Sigmoid colon (tissue), 7 donors: ENCODE measurements at regions of chr6 and their contacts with region 1.

Region 1: DNA sequence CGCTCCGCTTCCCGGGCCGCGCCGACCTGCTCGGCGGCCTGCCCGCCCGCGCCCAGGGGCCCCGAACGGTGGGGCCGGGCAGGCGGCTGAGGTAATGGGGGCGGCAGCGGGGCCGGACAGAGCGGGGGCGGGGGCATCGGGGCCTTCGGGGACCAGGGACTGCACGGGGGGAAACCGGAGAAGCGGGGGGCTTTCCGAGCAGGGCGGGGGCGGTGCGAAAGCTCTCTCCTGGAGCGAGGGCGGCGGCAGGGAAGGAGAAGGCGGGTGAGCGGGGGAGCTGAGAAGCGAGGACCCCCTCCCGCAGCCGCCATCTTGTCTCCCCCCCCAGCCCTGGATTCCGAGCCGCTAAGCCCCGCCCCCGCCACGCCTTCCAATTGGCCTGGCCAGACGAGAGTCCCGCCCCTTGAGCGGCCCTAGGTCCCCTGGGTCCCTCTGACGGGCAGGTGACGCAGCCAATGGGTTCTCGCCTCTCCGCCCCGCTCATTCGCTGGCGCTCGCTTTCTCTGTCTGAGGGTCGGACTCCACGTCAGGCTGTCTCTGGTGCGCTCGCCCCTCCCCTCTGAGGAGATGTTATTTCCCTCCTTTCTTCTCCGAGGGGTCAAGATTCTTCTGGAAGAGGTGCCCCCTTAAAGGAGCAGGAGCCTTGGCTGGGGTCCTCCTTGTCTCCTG is 470 bp downstream of the BRPF3 start:
- DNase-seq: peak; percentile 99
- H3K4me3 ChIP-seq: peak overlapping the region; percentile 80 to 97 (median 89)
- H3K27ac ChIP-seq: peak overlapping the region; percentile 93 to 99 (median 98)
- H3K4me1 ChIP-seq: peaks cover 0 to 38% (median 21%) of the 10 kb centered on the region in 4 donors
- H3K27me3 ChIP-seq: no peaks in the 10 kb centered on the region
- CTCF ChIP-seq: no peak
- EP300 ChIP-seq: no peak
- POLR2A ChIP-seq: peak; percentile 50 to 74

Region 2: GRCh38 chr6:36027501-36028087 is 169.4 kb before region 1 on chr6 and contains the start of gene MAPK14:
- intact Hi-C with region 1: loop called (anchors 1 kb)
- DNase-seq: peak; percentile 100
- H3K4me3 ChIP-seq: peak within 1 kb of the TSS; percentile 65 to 98 (median 90)
- H3K27ac ChIP-seq: peak within 1 kb of the TSS; percentile 92 to 98 (median 94)
- H3K4me1 ChIP-seq: peaks cover 0 to 38% (median 27%) of the 10 kb centered on the region in 4 donors
- H3K27me3 ChIP-seq: peaks cover 3 to 22% (median 5%) of the 10 kb centered on the region in 3 donors
- CTCF ChIP-seq: peak; percentile 86 to 96 (median 95)
- EP300 ChIP-seq: peak in 1 of 4 donors; percentile 40
- POLR2A ChIP-seq: peak; percentile 94 to 95
- total RNA-seq, gene MAPK14: 61.9 to 91.1 (median 67.7) TPM

Region 3: GRCh38 chr6:36123257-36124139 is 73.5 kb before region 1 on chr6:
- intact Hi-C with region 1: loop called (anchors 1 kb)
- DNase-seq: peak; percentile 91
- H3K4me3 ChIP-seq: peak overlapping the region in 1 of 4 donors; percentile 22
- H3K27ac ChIP-seq: no peak overlapping the region
- H3K4me1 ChIP-seq: peaks cover 0 to 14% (median 12%) of the 10 kb centered on the region in 4 donors
- H3K27me3 ChIP-seq: peaks cover 0 to 17% (median under 1%) of the 10 kb centered on the region in 3 donors
- CTCF ChIP-seq: peak; percentile 51 to 83 (median 62)
- EP300 ChIP-seq: no peak
- POLR2A ChIP-seq: no peak

Region 4: DNA sequence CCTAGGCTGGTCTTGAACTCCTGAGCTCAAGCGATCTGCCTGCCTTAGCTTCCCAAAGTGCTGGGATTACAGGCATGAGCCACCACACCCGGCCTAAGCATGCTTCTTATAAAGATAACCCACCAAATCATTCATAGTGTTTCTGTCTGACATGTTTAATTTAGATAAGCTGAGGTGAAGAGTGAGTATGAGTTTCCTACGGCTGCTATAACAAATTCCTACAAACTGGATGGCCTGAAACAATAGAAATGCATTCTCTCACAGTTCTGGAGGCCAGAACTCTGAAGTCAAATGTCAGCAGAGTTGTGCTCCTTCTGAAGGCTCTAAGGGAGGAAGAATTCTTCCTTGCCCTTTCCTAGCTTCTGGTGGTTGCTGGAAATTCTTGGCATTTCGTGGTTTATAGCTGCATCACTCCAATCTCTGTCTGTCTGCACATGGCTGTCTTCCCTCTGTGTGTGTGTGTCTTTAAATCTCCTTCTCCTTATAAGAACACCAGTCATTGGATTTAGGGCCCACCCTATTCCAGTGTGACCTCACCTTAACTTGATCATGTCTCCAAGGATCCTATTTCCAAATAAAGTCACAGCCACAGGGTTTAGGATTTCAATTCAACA is 36.8 kb before region 1 on chr6:
- intact Hi-C with region 1: no loop called
- DNase-seq: no peak
- H3K4me3 ChIP-seq: no peak overlapping the region
- H3K27ac ChIP-seq: no peak overlapping the region
- H3K4me1 ChIP-seq: no peaks in the 10 kb centered on the region
- H3K27me3 ChIP-seq: no peaks in the 10 kb centered on the region
- CTCF ChIP-seq: no peak
- EP300 ChIP-seq: no peak
- POLR2A ChIP-seq: no peak